K562 (cell line): ENCODE measurements at regions of chr17 and their contacts with region 1.

Region 1: DNA sequence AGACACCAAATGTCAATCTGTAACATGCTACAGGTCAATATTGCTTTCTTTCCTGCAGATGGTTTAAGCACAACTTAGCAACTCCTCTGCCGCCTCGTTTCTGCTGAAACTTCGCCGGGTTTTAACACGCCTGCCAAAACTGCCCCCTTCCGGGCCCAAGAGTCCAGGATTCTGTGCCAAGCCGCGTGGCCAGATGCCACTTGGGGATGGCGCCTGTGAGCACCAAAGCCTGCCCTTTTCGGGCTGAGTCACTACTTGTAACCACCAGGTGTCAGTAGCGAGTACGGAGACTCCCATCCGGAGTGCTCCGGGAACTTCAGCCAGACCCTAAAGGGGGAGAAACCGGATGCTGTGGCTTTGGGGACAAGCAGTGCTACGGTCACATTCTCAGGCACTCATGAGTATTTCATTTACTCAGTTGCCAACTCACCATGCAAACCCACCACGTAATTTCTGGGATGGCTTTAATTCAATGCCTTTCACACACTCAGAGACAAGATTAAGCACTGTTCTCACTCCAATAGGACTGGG is 7.8 kb downstream of the PMP22 start:
- DNase-seq: peak; percentile 70 to 84 (median 72)
- ATAC-seq: peak; percentile 69
- H3K4me3 ChIP-seq: peak overlapping the region; percentile 14; the same call in 1 of the 2 replicates
- H3K27ac ChIP-seq: peak overlapping the region; percentile 1; the same call in 1 of the 3 replicates
- H3K4me1 ChIP-seq: peaks cover 23 to 25% of the 10 kb centered on the region in 2 experiments
- H3K27me3 ChIP-seq: peaks cover 0 to 5% of the 10 kb centered on the region in 2 experiments; a peak in 1 of 5 replicates
- CTCF ChIP-seq: peak; percentile 73 to 85 (median 81)
- EP300 ChIP-seq: no peak
- POLR2A ChIP-seq: no peak
- RAD21 ChIP-seq: peak; percentile 33 to 54; a peak in 3 of 4 replicates

Region 2: GRCh38 chr17:14080847-14081251 is 1176.5 kb before region 1 on chr17:
- CTCF ChIA-PET with region 1: no interaction called
- POLR2A ChIA-PET with region 1: no interaction called
- in situ Hi-C with region 1: no loop called
- intact Hi-C with region 1: no loop called
- DNase-seq: no peak
- ATAC-seq: no peak
- H3K4me3 ChIP-seq: no peak overlapping the region
- H3K27ac ChIP-seq: no peak overlapping the region
- H3K4me1 ChIP-seq: no peaks in the 10 kb centered on the region; a peak in 3 of 5 replicates
- H3K27me3 ChIP-seq: no peaks in the 10 kb centered on the region
- CTCF ChIP-seq: no peak
- EP300 ChIP-seq: no peak
- POLR2A ChIP-seq: no peak
- RAD21 ChIP-seq: no peak

Region 3: DNA sequence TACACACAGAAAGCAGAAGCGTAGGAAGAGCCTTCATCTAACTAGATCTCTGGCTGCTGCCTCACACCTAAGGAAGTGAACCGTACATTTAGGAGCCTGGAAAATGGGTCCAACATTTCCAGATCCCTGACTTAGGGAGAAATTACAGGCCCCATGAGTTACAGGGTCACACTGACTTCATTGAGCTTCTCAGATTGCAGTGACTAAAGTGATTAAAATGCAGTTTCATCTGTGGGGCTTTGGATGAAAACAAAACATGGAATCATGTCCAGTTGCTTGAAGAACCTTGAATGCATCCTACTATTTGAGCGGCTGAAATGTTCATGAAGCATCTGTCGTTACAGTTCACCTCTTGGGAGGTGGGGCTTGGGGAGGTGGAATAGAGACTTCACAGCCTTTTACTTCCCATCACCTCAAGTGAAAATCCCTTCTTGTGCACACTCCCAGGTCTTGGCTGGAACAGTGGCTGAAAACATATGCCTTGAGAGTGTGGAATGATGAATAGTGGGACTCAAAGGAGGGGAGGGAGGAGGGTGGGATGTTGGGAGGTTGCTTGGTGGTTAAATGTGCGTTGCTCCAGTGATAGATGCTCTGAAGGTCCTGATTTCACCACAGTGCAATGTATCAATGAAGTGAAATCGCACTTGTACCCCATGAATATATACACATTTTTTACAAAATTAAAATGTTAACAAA is 64.4 kb after region 1 on chr17:
- CTCF ChIA-PET with region 1: no interaction called
- POLR2A ChIA-PET with region 1: no interaction called
- in situ Hi-C with region 1: no loop called
- intact Hi-C with region 1: no loop called
- DNase-seq: no peak
- ATAC-seq: no peak
- H3K4me3 ChIP-seq: no peak overlapping the region
- H3K27ac ChIP-seq: no peak overlapping the region
- H3K4me1 ChIP-seq: no peaks in the 10 kb centered on the region
- H3K27me3 ChIP-seq: peaks cover 10 to 11% of the 10 kb centered on the region in 2 experiments; a peak in 3 of 5 replicates
- CTCF ChIP-seq: no peak
- EP300 ChIP-seq: no peak
- POLR2A ChIP-seq: no peak
- RAD21 ChIP-seq: no peak

Region 4: DNA sequence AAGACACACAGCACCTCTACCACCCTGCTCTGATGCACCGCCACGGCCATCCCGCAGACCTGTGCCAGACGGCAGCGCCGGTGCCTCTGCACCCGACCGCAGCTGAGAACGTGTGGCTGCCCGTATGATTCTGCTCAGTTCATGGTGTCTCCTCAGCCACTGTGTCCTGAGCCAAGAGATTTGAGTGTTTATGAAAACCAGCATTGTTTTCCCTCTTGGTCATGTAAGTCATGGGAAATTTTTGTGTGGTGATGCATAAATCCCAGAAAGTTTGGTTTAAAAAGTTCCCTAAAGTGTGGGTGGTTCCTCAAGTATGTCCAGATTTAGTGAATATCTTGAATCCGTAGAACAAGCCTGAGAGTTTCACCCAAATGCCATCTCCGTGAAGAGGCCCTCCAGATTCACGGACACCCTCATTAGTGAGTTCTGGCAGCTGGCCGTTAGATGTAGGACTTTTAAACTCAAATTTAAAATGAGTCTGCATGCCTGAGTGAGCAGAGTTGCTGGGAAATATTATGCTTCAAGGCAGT is 152.5 kb after region 1 on chr17:
- CTCF ChIA-PET with region 1: no interaction called
- POLR2A ChIA-PET with region 1: no interaction called
- in situ Hi-C with region 1: no loop called
- intact Hi-C with region 1: loop called (anchors 2 kb)
- DNase-seq: no peak
- ATAC-seq: no peak
- H3K4me3 ChIP-seq: no peak overlapping the region
- H3K27ac ChIP-seq: no peak overlapping the region
- H3K4me1 ChIP-seq: no peaks in the 10 kb centered on the region
- H3K27me3 ChIP-seq: peaks cover 20 to 54% of the 10 kb centered on the region in 2 experiments
- CTCF ChIP-seq: no peak
- EP300 ChIP-seq: no peak
- POLR2A ChIP-seq: no peak
- RAD21 ChIP-seq: no peak

Region 5: DNA sequence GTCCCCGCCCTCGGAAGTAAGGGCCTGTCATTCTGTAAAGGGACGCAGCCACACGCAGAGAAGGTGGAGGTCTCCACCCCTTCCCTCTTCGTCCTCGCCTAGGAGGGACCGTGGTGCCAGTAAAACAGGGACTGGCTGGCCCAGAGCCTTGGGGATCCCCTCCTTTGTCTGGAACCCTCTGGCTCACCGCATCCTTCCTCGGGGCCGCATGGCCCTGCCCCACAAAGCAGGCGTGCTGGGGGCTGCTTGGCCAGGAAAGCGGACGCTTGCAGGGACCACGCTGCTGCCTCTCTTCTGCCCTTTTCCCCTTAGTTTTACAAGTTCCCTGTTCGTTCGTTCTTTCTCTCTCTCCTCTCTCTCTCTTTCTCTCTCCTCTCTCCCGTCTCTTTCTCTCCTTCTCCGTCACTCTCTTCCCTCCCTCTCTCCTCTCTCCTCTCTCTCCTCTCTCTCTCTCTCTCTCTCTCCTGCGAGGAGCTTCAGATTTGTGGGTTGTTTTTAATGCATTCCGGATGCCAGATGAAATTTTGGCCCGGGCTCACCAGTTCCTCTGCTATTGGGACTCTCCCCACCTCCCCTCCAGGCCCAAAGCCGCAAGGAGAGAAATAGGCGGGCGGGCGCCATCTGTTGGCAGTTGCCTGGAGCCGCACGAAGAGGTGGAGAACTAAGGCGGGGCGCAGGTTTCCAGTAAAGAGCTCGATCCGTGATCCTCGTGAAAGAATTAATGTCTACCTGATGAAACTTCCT is 245.2 kb after region 1 on chr17:
- CTCF ChIA-PET with region 1: interaction called, 28 read pairs
- POLR2A ChIA-PET with region 1: interaction called, 4 read pairs
- in situ Hi-C with region 1: loop called (anchors 5 kb)
- intact Hi-C with region 1: loop called (anchors 1 kb)
- DNase-seq: peak; percentile 60 to 78 (median 67)
- ATAC-seq: peak; percentile 97
- H3K4me3 ChIP-seq: no peak overlapping the region
- H3K27ac ChIP-seq: no peak overlapping the region
- H3K4me1 ChIP-seq: peaks cover 1 to 10% of the 10 kb centered on the region in 2 experiments; a peak in 4 of 5 replicates
- H3K27me3 ChIP-seq: no peaks in the 10 kb centered on the region
- CTCF ChIP-seq: peak; percentile 76 to 78 (median 78)
- EP300 ChIP-seq: no peak
- POLR2A ChIP-seq: no peak
- RAD21 ChIP-seq: peak; percentile 84

Region 6: DNA sequence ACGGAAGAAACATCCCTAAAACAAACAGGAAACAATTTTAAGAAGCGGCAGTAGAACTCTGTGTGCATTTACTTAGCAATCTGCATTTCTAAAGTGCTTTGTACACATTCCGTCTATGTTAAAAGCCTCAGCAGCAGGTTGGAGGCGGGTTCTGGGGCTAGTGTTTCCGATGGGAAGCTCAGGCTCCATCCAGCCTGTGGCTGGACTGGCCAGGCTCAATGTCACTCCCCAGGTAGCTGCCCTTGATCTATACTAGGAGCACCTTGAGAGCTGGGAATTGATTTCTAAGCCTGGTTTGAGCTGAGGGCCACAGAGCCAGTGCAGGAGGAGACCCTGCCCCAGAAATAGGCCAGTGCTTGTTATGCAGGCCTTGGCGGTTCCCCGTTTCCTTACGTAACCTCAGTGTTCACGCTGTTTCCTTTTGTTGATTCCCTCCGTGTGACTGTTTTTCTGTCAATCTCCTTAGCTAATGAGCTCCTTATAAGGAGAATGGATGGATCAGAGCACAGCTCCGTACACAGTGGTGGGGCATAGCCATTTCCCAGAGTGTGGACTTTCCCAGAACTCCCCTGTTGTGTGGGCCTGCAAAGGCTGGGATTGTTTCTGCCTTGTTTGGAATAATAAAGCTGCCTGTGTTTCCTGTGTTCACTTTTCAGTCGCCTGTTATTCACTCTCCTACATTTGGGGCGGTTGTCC is 709.0 kb after region 1 on chr17:
- CTCF ChIA-PET with region 1: no interaction called
- POLR2A ChIA-PET with region 1: no interaction called
- in situ Hi-C with region 1: loop called (anchors 25 kb)
- intact Hi-C with region 1: no loop called
- DNase-seq: no peak
- ATAC-seq: peak; percentile 35
- H3K4me3 ChIP-seq: no peak overlapping the region
- H3K27ac ChIP-seq: peak overlapping the region; percentile 22; the same call in 1 of the 3 replicates
- H3K4me1 ChIP-seq: peaks cover 19 to 38% of the 10 kb centered on the region in 2 experiments
- H3K27me3 ChIP-seq: no peaks in the 10 kb centered on the region
- CTCF ChIP-seq: no peak
- EP300 ChIP-seq: no peak
- POLR2A ChIP-seq: no peak
- RAD21 ChIP-seq: no peak